T-cell (primary cell): ENCODE measurements at regions of chr3 and their contacts with region 1.

Region 1: GRCh38 chr3:149812606-149813366 is at the start of gene RNF13:
- DNase-seq: peak; percentile 85 to 96 (median 92)
- ATAC-seq: peak; percentile 95 to 97 (median 96)
- H3K4me3 ChIP-seq: peak within 1 kb of the TSS; percentile 85 to 96
- H3K4me3 Mint-ChIP-seq: peak within 1 kb of the TSS; percentile 98 to 100 (median 98)
- H3K27ac ChIP-seq: peak within 1 kb of the TSS; percentile 94
- H3K27ac Mint-ChIP-seq: peak within 1 kb of the TSS; percentile 99 to 100
- H3K4me1 ChIP-seq: peaks cover 11 to 18% of the 10 kb centered on the region in 2 experiments
- H3K4me1 Mint-ChIP-seq: peaks cover 41 to 52% (median 48%) of the 10 kb centered on the region in 3 donors
- H3K27me3 ChIP-seq: no peaks in the 10 kb centered on the region
- H3K27me3 Mint-ChIP-seq: peaks cover 3 to 4% of the 10 kb centered on the region in 2 donors
- total RNA-seq, gene RNF13: 45.0 to 55.8 (median 54.8) TPM

Region 2: DNA sequence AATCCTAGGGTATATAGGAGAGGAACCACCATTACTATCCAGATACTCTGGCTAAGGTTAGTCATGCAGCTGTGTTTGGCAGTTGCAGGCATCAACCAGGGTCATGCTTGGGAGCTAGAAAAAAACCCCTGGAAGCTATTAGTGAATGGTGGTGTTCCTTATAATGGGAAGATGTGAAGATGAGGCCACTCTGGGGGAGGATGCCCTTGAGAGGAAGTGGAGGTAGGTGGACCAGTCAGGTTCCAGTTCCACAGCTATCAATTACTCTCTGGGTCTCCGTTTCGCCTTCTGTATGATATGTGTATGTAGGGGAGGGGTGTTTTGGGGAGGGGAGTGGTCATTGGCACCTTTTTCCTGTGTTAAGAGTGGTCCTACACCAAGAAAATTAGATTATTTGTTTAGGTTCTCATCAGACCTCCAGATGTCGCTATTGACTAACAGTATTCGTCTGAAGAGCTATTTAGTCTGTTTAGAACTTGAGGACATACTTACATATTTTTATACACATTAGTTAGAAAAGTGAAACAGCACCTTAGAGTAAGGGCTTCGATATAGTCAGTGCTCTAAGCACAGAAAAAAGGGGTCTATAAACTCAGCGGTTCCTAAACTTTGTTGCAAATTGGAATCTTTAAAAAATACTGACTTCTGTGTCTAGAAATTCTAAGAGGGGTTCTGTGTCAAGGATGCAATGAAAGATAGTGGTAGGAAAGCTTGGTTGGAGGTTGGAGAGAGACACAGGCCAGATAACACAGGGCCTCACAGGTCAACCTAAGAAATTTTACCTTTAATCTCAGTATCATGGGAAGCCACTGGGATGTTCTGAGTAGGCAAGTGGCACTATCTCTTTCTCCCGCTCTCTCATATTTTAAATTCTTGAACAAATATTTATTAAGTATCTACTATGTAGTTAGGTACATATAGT is 692.5 kb before region 1 on chr3:
- CTCF ChIA-PET with region 1: interaction called, 3 to 12 read pairs
- POLR2A ChIA-PET with region 1: no interaction called
- DNase-seq: peak in 9 of 35 experiments; percentile 2 to 80 (median 11)
- ATAC-seq: peak; percentile 67 to 78 (median 74)
- H3K4me3 ChIP-seq: no peak overlapping the region
- H3K4me3 Mint-ChIP-seq: no peak overlapping the region
- H3K27ac ChIP-seq: no peak overlapping the region
- H3K27ac Mint-ChIP-seq: peak overlapping the region in 1 of 2 donors; percentile 34
- H3K4me1 ChIP-seq: no peaks in the 10 kb centered on the region
- H3K4me1 Mint-ChIP-seq: peaks cover 0 to 2% (median 2%) of the 10 kb centered on the region in 3 donors
- H3K27me3 ChIP-seq: peaks cover 0 to 3% of the 10 kb centered on the region in 2 experiments
- H3K27me3 Mint-ChIP-seq: peaks cover 2 to 12% of the 10 kb centered on the region in 2 donors

Region 3: GRCh38 chr3:149589332-149589731 is 223.5 kb before region 1 on chr3:
- CTCF ChIA-PET with region 1: no interaction called
- POLR2A ChIA-PET with region 1: no interaction called
- DNase-seq: no peak
- ATAC-seq: no peak
- H3K4me3 ChIP-seq: no peak overlapping the region
- H3K4me3 Mint-ChIP-seq: no peak overlapping the region
- H3K27ac ChIP-seq: no peak overlapping the region
- H3K27ac Mint-ChIP-seq: no peak overlapping the region
- H3K4me1 ChIP-seq: peaks cover 0 to 2% of the 10 kb centered on the region in 2 experiments
- H3K4me1 Mint-ChIP-seq: peaks cover 0 to 2% (median 0%) of the 10 kb centered on the region in 3 donors
- H3K27me3 ChIP-seq: no peaks in the 10 kb centered on the region
- H3K27me3 Mint-ChIP-seq: peaks cover 4 to 13% of the 10 kb centered on the region in 2 donors

Region 4: GRCh38 chr3:149752051-149752787 is 60.6 kb before region 1 on chr3 and contains the start of gene COMMD2:
- CTCF ChIA-PET with region 1: interaction called, 6 to 23 read pairs
- POLR2A ChIA-PET with region 1: interaction called in 1 of 2 experiments, 3 read pairs
- DNase-seq: peak; percentile 46 to 83 (median 58)
- ATAC-seq: peak; percentile 87 to 96 (median 94)
- H3K4me3 ChIP-seq: peak within 1 kb of the TSS; percentile 85 to 95
- H3K4me3 Mint-ChIP-seq: peak within 1 kb of the TSS; percentile 94 to 98 (median 96)
- H3K27ac ChIP-seq: peak within 1 kb of the TSS; percentile 79
- H3K27ac Mint-ChIP-seq: peak within 1 kb of the TSS; percentile 94 to 97
- H3K4me1 ChIP-seq: peaks cover 9% of the 10 kb centered on the region in 2 experiments
- H3K4me1 Mint-ChIP-seq: peaks cover 37 to 48% (median 38%) of the 10 kb centered on the region in 3 donors
- H3K27me3 ChIP-seq: no peaks in the 10 kb centered on the region
- H3K27me3 Mint-ChIP-seq: peaks cover 0 to 2% of the 10 kb centered on the region in 2 donors
- total RNA-seq, gene COMMD2: 29.5 to 36.1 (median 33.7) TPM

Region 5: GRCh38 chr3:149765762-149766334 is 46.9 kb before region 1 on chr3:
- CTCF ChIA-PET with region 1: interaction called, 16 to 26 read pairs
- POLR2A ChIA-PET with region 1: no interaction called
- DNase-seq: peak in 1 of 35 experiments; percentile 11
- ATAC-seq: no peak
- H3K4me3 ChIP-seq: no peak overlapping the region
- H3K4me3 Mint-ChIP-seq: no peak overlapping the region
- H3K27ac ChIP-seq: no peak overlapping the region
- H3K27ac Mint-ChIP-seq: no peak overlapping the region
- H3K4me1 ChIP-seq: no peaks in the 10 kb centered on the region
- H3K4me1 Mint-ChIP-seq: no peaks in the 10 kb centered on the region
- H3K27me3 ChIP-seq: peaks cover 2 to 3% of the 10 kb centered on the region in 2 experiments
- H3K27me3 Mint-ChIP-seq: peaks cover 21 to 33% of the 10 kb centered on the region in 2 donors

Region 6: DNA sequence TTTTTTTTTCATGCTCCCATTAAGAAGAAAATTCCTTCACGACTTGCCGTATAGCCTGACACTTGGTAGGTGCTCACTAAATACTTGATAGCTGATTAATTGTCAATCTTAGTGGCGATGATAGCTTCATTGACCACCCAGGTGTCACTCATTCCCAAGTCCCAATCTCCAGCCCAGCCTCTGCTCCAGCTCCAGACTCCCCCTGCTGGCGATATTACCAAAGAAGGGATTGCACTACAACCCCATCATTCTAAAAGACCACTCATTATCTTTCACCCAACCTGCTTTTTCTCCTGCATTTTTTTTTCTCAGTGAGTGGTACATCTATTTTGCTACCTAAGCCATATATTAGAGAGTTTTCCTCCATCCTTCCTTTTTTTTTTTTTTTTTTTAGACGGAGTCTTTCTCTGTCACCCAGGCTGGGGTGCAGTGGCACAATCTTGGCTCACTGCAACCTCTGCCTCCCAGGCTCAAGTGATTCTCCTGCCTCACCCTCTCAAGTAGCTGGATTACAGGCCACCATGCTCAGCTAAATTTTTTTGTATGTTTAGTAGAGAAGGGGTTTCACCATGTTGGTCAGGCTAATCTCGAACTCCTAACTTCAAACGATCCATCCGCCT is 41.0 kb before region 1 on chr3:
- CTCF ChIA-PET with region 1: interaction called, 16 to 26 read pairs
- POLR2A ChIA-PET with region 1: no interaction called
- DNase-seq: peak in 19 of 35 experiments; percentile 2 to 54 (median 15)
- ATAC-seq: peak in 1 of 4 experiments; percentile 59
- H3K4me3 ChIP-seq: no peak overlapping the region
- H3K4me3 Mint-ChIP-seq: no peak overlapping the region
- H3K27ac ChIP-seq: no peak overlapping the region
- H3K27ac Mint-ChIP-seq: no peak overlapping the region
- H3K4me1 ChIP-seq: no peaks in the 10 kb centered on the region
- H3K4me1 Mint-ChIP-seq: no peaks in the 10 kb centered on the region
- H3K27me3 ChIP-seq: peaks cover 0 to 3% of the 10 kb centered on the region in 2 experiments
- H3K27me3 Mint-ChIP-seq: peaks cover 14 to 21% of the 10 kb centered on the region in 2 donors

Region 7: GRCh38 chr3:149902498-149903139 is 89.8 kb after region 1 on chr3:
- CTCF ChIA-PET with region 1: interaction called in 1 of 2 experiments, 15 read pairs
- POLR2A ChIA-PET with region 1: no interaction called
- DNase-seq: no peak
- ATAC-seq: no peak
- H3K4me3 ChIP-seq: no peak overlapping the region
- H3K4me3 Mint-ChIP-seq: no peak overlapping the region
- H3K27ac ChIP-seq: no peak overlapping the region
- H3K27ac Mint-ChIP-seq: no peak overlapping the region
- H3K4me1 ChIP-seq: no peaks in the 10 kb centered on the region
- H3K4me1 Mint-ChIP-seq: peaks cover 4 to 8% (median 7%) of the 10 kb centered on the region in 3 donors
- H3K27me3 ChIP-seq: no peaks in the 10 kb centered on the region
- H3K27me3 Mint-ChIP-seq: no peaks in the 10 kb centered on the region

Region 8: DNA sequence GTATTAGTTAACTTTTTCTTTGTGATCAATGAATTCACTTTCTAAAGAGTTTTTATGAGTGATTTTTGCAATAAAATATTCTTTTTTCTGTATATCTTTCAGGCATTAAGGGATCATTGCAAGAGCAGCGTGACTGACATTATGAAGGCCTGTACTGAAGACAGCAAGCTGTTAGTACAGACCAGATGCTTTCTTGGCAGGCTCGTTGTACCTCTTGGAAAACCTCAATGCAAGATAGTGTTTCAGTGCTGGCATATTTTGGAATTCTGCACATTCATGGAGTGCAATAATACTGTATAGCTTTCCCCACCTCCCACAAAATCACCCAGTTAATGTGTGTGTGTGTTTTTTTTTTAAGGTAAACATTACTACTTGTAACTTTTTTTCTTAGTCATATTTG is 814.8 kb after region 1 on chr3:
- CTCF ChIA-PET with region 1: no interaction called
- POLR2A ChIA-PET with region 1: no interaction called
- DNase-seq: no peak
- ATAC-seq: no peak
- H3K4me3 ChIP-seq: no peak overlapping the region
- H3K4me3 Mint-ChIP-seq: no peak overlapping the region
- H3K27ac ChIP-seq: no peak overlapping the region
- H3K27ac Mint-ChIP-seq: no peak overlapping the region
- H3K4me1 ChIP-seq: no peaks in the 10 kb centered on the region
- H3K4me1 Mint-ChIP-seq: peaks cover 0 to 13% (median 7%) of the 10 kb centered on the region in 3 donors
- H3K27me3 ChIP-seq: no peaks in the 10 kb centered on the region
- H3K27me3 Mint-ChIP-seq: no peaks in the 10 kb centered on the region